ENCODE measurements at regions of chr6 and their contacts with region 1.

Region 1: DNA sequence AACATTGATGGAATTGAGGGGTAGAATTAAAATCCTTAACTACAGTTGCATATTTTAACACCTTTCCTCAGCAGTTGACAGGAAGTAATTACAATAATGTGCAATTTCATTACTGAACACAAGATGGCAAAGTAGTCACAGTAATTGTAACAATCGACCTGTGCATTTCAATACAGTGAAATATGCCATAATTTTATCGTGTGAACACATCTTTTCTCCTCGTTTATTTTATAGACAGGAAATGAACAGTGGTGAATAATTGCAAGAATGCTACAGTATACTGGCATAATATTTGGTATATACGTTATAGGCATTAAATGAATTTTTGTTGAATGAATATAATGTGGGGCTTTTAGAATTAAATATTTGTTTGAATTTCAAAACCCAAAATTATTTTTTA is 25.0 kb downstream of the CYB5R4 start:
- DNase-seq: peak; percentile 84
- H3K4me3 ChIP-seq: no peak overlapping the region
- H3K27ac ChIP-seq: no peak overlapping the region
- H3K4me1 ChIP-seq: peaks cover 9% of the 10 kb centered on the region
- H3K27me3 ChIP-seq: no peaks in the 10 kb centered on the region
- CTCF ChIP-seq: peak; percentile 41 to 59
- POLR2A ChIP-seq: no peak

Region 2: GRCh38 chr6:83637953-83638352 is 246.6 kb before region 1 on chr6:
- CTCF ChIA-PET with region 1: no interaction called
- POLR2A ChIA-PET with region 1: no interaction called
- dilution Hi-C with region 1: no loop called
- intact Hi-C with region 1: no loop called
- DNase-seq: no peak
- H3K4me3 ChIP-seq: no peak overlapping the region
- H3K27ac ChIP-seq: no peak overlapping the region
- H3K4me1 ChIP-seq: no peaks in the 10 kb centered on the region
- H3K27me3 ChIP-seq: no peaks in the 10 kb centered on the region
- CTCF ChIP-seq: no peak
- POLR2A ChIP-seq: no peak

Region 3: DNA sequence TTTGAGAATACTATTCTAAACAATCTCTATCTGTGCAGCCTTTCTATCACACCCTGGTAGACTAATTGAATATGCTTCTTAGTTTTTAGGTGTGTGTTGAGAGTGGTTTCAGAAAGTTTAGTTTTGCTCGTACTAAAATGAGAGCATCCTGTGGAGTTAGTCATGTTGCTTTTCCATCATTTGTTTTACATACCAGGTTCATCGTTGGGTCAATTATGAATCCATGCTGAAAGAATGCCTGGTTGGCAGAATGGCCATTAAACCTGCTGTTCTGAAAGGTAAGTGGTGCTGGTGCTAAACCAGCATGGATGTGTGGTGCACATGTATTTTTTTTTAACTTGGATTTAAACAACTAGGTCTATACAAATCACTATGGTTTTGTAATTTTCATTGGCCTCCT is 24.3 kb after region 1 on chr6:
- CTCF ChIA-PET with region 1: no interaction called
- POLR2A ChIA-PET with region 1: no interaction called
- dilution Hi-C with region 1: no loop called
- intact Hi-C with region 1: no loop called
- DNase-seq: peak; percentile 19
- H3K4me3 ChIP-seq: no peak overlapping the region
- H3K27ac ChIP-seq: no peak overlapping the region
- H3K4me1 ChIP-seq: no peaks in the 10 kb centered on the region
- H3K27me3 ChIP-seq: no peaks in the 10 kb centered on the region
- CTCF ChIP-seq: no peak
- POLR2A ChIP-seq: no peak

Region 4: DNA sequence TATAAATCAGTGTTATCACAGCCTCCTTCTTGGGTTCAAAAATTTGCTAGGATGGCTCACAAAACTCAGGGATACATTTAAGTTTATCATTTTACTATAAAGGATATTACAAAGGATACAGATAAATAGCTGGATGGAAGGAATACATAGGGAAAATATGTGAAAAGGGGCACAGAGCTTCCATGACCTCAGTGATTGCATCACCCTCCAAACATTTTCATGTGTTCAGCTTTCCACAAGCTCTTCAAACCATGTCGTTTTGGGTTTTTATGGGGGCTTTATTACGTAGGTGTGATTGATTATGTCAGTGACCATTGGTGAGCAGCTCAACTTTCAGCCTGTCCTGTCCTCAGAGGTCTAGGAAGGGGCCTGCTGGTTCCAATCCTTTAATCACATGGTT is 42.9 kb after region 1 on chr6:
- CTCF ChIA-PET with region 1: no interaction called
- POLR2A ChIA-PET with region 1: no interaction called
- dilution Hi-C with region 1: no loop called
- intact Hi-C with region 1: no loop called
- DNase-seq: no peak
- H3K4me3 ChIP-seq: no peak overlapping the region
- H3K27ac ChIP-seq: no peak overlapping the region
- H3K4me1 ChIP-seq: no peaks in the 10 kb centered on the region
- H3K27me3 ChIP-seq: no peaks in the 10 kb centered on the region
- CTCF ChIP-seq: no peak
- POLR2A ChIP-seq: no peak

Region 5: DNA sequence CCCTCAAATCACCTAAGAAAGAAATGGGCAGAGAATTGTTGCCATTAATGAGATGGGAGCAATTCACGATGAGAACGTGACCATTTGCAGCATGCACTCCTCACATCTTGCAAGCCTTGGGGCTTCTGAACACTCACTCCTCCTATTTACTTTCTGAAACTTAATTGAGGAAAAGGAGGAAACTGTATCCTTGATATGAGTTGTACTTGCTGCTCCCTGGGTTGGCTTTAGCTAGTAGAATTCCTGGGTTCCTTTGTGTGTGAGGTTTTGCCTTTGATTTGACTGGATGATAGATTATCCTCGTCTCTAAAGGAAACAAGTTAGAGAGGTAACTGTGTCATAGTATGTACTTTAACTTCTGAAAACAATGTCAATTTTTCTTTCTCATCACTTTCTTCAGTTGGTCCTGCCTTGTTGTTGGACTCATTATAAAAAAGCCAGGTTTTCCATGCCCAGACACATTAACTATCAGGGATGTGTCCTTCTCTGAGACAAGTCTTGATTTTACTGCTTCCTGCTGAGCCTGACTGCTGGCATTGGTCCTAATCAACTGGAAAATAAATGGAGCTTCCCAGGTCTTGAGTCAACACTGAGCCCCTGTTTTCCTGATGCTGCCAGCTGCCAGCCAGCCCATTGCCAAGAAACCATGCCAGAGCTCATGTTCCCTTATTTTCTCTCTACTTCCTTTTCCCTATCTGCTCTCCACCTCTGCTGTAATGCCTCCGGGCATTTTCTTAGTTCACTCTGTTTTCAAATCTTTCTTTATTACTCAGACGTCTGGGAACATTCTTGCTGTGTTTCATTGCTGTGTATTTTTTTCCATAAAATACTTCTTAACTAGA is 143.0 kb after region 1 on chr6:
- CTCF ChIA-PET with region 1: no interaction called
- POLR2A ChIA-PET with region 1: no interaction called
- dilution Hi-C with region 1: no loop called
- intact Hi-C with region 1: loop called (anchors 2 kb)
- DNase-seq: peak; percentile 98
- H3K4me3 ChIP-seq: no peak overlapping the region
- H3K27ac ChIP-seq: peak overlapping the region; percentile 26
- H3K4me1 ChIP-seq: peaks cover 24% of the 10 kb centered on the region
- H3K27me3 ChIP-seq: no peaks in the 10 kb centered on the region
- CTCF ChIP-seq: no peak
- POLR2A ChIP-seq: no peak

Region 6: GRCh38 chr6:84042603-84043002 is 158.1 kb after region 1 on chr6:
- CTCF ChIA-PET with region 1: no interaction called
- POLR2A ChIA-PET with region 1: no interaction called
- dilution Hi-C with region 1: no loop called
- intact Hi-C with region 1: no loop called
- DNase-seq: no peak
- H3K4me3 ChIP-seq: no peak overlapping the region
- H3K27ac ChIP-seq: no peak overlapping the region
- H3K4me1 ChIP-seq: no peaks in the 10 kb centered on the region
- H3K27me3 ChIP-seq: no peaks in the 10 kb centered on the region
- CTCF ChIP-seq: no peak
- POLR2A ChIP-seq: no peak

Region 7: GRCh38 chr6:84220809-84221409 is 336.4 kb after region 1 on chr6:
- CTCF ChIA-PET with region 1: interaction called, 13 read pairs
- POLR2A ChIA-PET with region 1: no interaction called
- dilution Hi-C with region 1: no loop called
- intact Hi-C with region 1: loop called (anchors 1 kb)
- DNase-seq: peak; percentile 55
- H3K4me3 ChIP-seq: no peak overlapping the region
- H3K27ac ChIP-seq: no peak overlapping the region
- H3K4me1 ChIP-seq: no peaks in the 10 kb centered on the region
- H3K27me3 ChIP-seq: no peaks in the 10 kb centered on the region
- CTCF ChIP-seq: peak in 1 of 2 donors; percentile 12
- POLR2A ChIP-seq: no peak

Region 8: DNA sequence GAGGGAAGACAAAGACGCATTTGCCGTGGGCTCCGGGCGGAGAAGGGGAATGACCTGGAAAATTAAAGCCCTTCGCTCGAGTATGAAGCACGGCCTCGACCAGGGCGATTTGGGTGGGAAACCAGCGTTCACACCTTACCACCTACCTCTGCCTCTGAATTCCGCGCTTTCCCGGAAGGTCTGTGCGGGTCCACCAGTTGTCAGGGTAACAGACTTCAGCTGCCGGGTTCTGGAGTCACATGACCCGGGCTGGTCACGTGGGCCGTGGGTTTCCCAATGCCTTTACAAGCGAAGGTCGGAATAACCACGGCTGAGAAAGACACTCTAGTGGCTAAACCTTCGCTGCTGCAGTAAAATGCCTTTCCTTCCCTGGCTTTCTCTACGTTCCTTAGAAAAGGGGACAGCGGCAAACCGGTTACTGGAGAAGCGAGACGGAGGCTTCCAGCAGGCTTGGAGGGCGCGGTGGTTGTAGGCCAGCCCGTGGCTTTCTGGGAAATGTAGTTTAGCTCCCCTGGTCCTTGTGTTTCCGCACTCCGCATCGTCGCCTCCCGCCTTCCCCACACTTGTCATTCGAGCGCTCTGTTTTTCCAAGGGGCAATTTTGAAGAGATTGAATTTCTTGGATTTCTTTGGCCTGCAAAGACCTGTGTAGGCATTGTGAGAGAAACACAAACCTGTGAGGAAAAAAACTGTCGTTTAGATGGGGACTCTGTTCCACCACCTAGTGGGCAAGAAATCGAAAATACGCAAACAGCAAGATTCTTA is 343.1 kb after region 1 on chr6 and contains the start of gene CEP162:
- CTCF ChIA-PET with region 1: interaction called, 18 read pairs
- POLR2A ChIA-PET with region 1: no interaction called
- dilution Hi-C with region 1: no loop called
- intact Hi-C with region 1: loop called (anchors 1 kb)
- DNase-seq: peak; percentile 95
- H3K4me3 ChIP-seq: peak within 1 kb of the TSS; percentile 57 to 74 (median 67)
- H3K27ac ChIP-seq: peak within 1 kb of the TSS; percentile 14
- H3K4me1 ChIP-seq: peaks cover 7% of the 10 kb centered on the region
- H3K27me3 ChIP-seq: peaks cover 11 to 24% of the 10 kb centered on the region in 2 experiments
- CTCF ChIP-seq: peak; percentile 55 to 62
- POLR2A ChIP-seq: peak; percentile 20
- total RNA-seq, gene CEP162: 8.8 and 10.8 TPM in 2 replicates

Region 9: GRCh38 chr6:84568971-84569370 is 684.4 kb after region 1 on chr6:
- CTCF ChIA-PET with region 1: no interaction called
- POLR2A ChIA-PET with region 1: no interaction called
- dilution Hi-C with region 1: no loop called
- intact Hi-C with region 1: loop called (anchors 1 kb)
- DNase-seq: peak; percentile 64
- H3K4me3 ChIP-seq: no peak overlapping the region
- H3K27ac ChIP-seq: no peak overlapping the region
- H3K4me1 ChIP-seq: no peaks in the 10 kb centered on the region
- H3K27me3 ChIP-seq: no peaks in the 10 kb centered on the region
- CTCF ChIP-seq: peak in 1 of 2 donors; percentile 30
- POLR2A ChIP-seq: no peak

Region 10: DNA sequence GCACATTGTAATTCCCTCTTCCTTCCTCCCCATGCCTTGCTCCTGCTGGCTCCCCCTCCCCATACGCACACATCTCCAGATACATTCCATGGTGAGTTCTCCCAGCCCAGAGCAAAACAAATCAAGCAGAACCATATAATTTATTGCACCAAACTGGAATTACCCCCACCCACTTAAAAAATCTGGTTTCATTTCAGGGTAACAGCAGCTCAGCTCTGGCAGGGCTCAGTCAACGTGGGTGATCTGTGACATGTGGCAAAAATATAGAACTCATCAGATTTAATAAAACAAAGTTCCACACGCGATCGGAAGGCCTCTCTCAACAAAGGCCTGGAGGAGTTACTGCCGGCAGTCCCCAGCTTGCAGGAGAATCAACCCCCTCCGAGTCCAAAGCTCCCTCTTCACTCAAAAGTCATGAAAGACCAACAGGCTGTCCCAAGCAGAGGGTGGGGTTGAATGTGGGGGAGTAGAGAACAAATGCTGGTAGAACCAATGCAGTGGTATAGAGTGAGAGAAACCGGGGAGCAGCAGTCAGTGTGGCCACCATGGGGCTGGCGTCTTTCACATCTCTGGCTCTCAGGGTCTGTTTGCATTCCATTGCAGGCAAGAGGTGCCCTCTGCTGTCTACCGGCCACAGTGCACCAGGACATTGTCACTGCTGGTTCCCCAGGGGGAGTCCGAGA is 1242.1 kb after region 1 on chr6:
- CTCF ChIA-PET with region 1: no interaction called
- POLR2A ChIA-PET with region 1: no interaction called
- dilution Hi-C with region 1: no loop called
- intact Hi-C with region 1: loop called (anchors 5 kb)
- DNase-seq: peak; percentile 75
- H3K4me3 ChIP-seq: no peak overlapping the region
- H3K27ac ChIP-seq: no peak overlapping the region
- H3K4me1 ChIP-seq: no peaks in the 10 kb centered on the region
- H3K27me3 ChIP-seq: peaks cover 14 to 17% of the 10 kb centered on the region in 2 experiments
- CTCF ChIP-seq: peak; percentile 72 to 89
- POLR2A ChIP-seq: no peak